Right cardiac atrium (tissue), 5 donors: ENCODE measurements at regions of chr19 and their contacts with region 1.

Region 1: GRCh38 chr19:38929929-38930775 is at the start of gene SARS2:
- DNase-seq: peak; percentile 92 to 97 (median 97)
- ATAC-seq: peak; percentile 86 to 88
- H3K4me3 ChIP-seq: peak within 1 kb of the TSS; percentile 87
- H3K27ac ChIP-seq: peak within 1 kb of the TSS; percentile 75
- H3K4me1 ChIP-seq: no peaks in the 10 kb centered on the region
- H3K27me3 ChIP-seq: no peaks in the 10 kb centered on the region
- total RNA-seq, gene SARS2: 15.5 to 20.3 (median 16.4) TPM

Region 2: DNA sequence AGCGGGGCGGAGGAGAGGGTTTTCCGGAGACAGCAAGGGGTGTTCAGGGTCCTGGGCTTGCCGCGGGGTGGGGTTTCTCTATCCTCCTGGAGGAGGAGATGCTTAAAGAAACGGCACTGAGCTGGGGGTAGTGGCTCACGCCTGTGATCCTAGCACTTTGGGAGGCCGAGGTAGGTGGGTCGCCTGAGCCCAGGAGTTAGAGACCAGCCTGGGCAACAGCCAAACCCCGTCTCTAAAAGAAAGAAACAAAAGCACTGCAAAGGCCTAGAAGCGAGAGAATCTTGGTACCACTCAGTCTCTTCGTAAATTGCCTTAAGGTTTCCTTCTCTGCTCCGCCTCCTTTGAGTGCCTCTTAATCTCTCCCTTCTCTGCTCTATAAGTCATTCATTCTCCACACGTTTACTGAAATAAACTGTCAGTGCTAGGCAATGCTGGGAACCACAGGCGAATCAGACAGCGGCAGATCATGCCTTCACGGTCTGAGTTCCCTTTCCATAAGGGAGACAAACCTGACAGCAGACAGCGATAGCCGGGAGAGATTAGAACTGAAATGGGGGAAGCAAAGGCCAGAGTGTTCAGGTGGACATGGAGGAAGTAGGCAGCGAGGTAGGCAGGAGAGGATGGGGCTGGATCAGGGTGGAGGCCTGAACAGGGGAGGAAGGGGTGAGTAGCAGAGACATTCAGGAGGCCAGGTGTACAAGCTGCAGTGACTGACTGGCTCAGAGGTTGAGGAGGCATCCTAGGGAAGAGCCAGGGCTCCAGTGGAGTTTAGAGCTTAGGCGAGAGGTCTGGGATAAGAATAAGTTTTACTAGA is 310.6 kb before region 1 on chr19:
- intact Hi-C with region 1: loop called in 1 of 4 experiments (anchors 10 kb)
- DNase-seq: no peak
- ATAC-seq: peak in 1 of 2 donors; percentile 25
- H3K4me3 ChIP-seq: peak overlapping the region; percentile 86
- H3K27ac ChIP-seq: peak overlapping the region; percentile 92
- H3K4me1 ChIP-seq: peaks cover 9% of the 10 kb centered on the region
- H3K27me3 ChIP-seq: no peaks in the 10 kb centered on the region

Region 3: GRCh38 chr19:38849860-38850435 is 80.2 kb before region 1 on chr19 and contains the start of gene HNRNPL:
- intact Hi-C with region 1: loop called in 1 of 4 experiments (anchors 5 kb)
- DNase-seq: peak; percentile 99 to 100 (median 100)
- ATAC-seq: peak; percentile 82 to 85
- H3K4me3 ChIP-seq: peak within 1 kb of the TSS; percentile 68
- H3K27ac ChIP-seq: peak within 1 kb of the TSS; percentile 99
- H3K4me1 ChIP-seq: peaks cover 8% of the 10 kb centered on the region
- H3K27me3 ChIP-seq: no peaks in the 10 kb centered on the region
- total RNA-seq, gene HNRNPL: 146 to 206 (median 178) TPM